Activated T-helper 1 cell treated with anti-CD3 and anti-CD28 coated beads, Interleukin-12 subunit alpha, Interleukin-12 subunit beta, Interleukin-2, Interleukin-4 antibody, amounts not matched to agents 30 ng/mL and 10 ng/mL and 1 ng/mL, durations not matched to agents 14 hours and 24 hours and 36 hours (primary cell): ENCODE measurements at regions of chr7 and their contacts with region 1.

Region 1: GRCh38 chr7:140230861-140231770 is 54.3 kb upstream of the KDM7A start:
- DNase-seq: peak; percentile 45
- H3K4me3 Mint-ChIP-seq: peak overlapping the region; percentile 91
- H3K27ac Mint-ChIP-seq: peak overlapping the region; percentile 94
- H3K4me1 Mint-ChIP-seq: peaks cover 46% of the 10 kb centered on the region
- H3K27me3 Mint-ChIP-seq: no peaks in the 10 kb centered on the region

Region 2: GRCh38 chr7:140121326-140121725 is 109.8 kb before region 1 on chr7:
- intact Hi-C with region 1: no loop called
- DNase-seq: no peak
- H3K4me3 Mint-ChIP-seq: no peak overlapping the region
- H3K27ac Mint-ChIP-seq: no peak overlapping the region
- H3K4me1 Mint-ChIP-seq: peaks cover 25% of the 10 kb centered on the region
- H3K27me3 Mint-ChIP-seq: no peaks in the 10 kb centered on the region

Region 3: GRCh38 chr7:140209866-140210609 is 21.1 kb before region 1 on chr7:
- intact Hi-C with region 1: loop called (anchors 1 kb)
- DNase-seq: peak; percentile 64
- H3K4me3 Mint-ChIP-seq: peak overlapping the region; percentile 71
- H3K27ac Mint-ChIP-seq: peak overlapping the region; percentile 86
- H3K4me1 Mint-ChIP-seq: peaks cover 79% of the 10 kb centered on the region
- H3K27me3 Mint-ChIP-seq: no peaks in the 10 kb centered on the region

Region 4: GRCh38 chr7:140249036-140249806 is 18.1 kb after region 1 on chr7:
- intact Hi-C with region 1: loop called (anchors 1 kb)
- DNase-seq: no peak
- H3K4me3 Mint-ChIP-seq: no peak overlapping the region
- H3K27ac Mint-ChIP-seq: no peak overlapping the region
- H3K4me1 Mint-ChIP-seq: peaks cover 30% of the 10 kb centered on the region
- H3K27me3 Mint-ChIP-seq: no peaks in the 10 kb centered on the region

Region 5: GRCh38 chr7:140403878-140404564 is 172.9 kb after region 1 on chr7 and contains the start of gene RAB19:
- intact Hi-C with region 1: loop called (anchors 5 kb)
- DNase-seq: peak; percentile 26
- H3K4me3 Mint-ChIP-seq: peak within 1 kb of the TSS; percentile 95
- H3K27ac Mint-ChIP-seq: peak within 1 kb of the TSS; percentile 90
- H3K4me1 Mint-ChIP-seq: peaks cover 49% of the 10 kb centered on the region
- H3K27me3 Mint-ChIP-seq: no peaks in the 10 kb centered on the region
- total RNA-seq, gene RAB19: 23.9 and 27.0 TPM in 2 replicates